ENCODE measurements at regions of chr9 and their contacts with region 1.

Region 1: GRCh38 chr9:107340920-107341632 is 58.0 kb downstream of the RAD23B start:
- DNase-seq: peak; percentile 86
- ATAC-seq: peak; percentile 84
- H3K4me3 Mint-ChIP-seq: no peak overlapping the region
- H3K27ac Mint-ChIP-seq: peak overlapping the region; percentile 69
- H3K4me1 Mint-ChIP-seq: peaks cover 15% of the 10 kb centered on the region
- H3K27me3 Mint-ChIP-seq: no peaks in the 10 kb centered on the region
- CTCF ChIP-seq: peak; percentile 89

Region 2: GRCh38 chr9:106339882-106340281 is 1001.2 kb before region 1 on chr9:
- CTCF ChIA-PET with region 1: no interaction called
- POLR2A ChIA-PET with region 1: no interaction called
- intact Hi-C with region 1: no loop called
- DNase-seq: no peak
- ATAC-seq: no peak
- H3K4me3 Mint-ChIP-seq: no peak overlapping the region
- H3K27ac Mint-ChIP-seq: no peak overlapping the region
- H3K4me1 Mint-ChIP-seq: no peaks in the 10 kb centered on the region
- H3K27me3 Mint-ChIP-seq: no peaks in the 10 kb centered on the region
- CTCF ChIP-seq: no peak

Region 3: GRCh38 chr9:107172160-107172978 is 168.7 kb before region 1 on chr9:
- CTCF ChIA-PET with region 1: interaction called, 10 read pairs
- POLR2A ChIA-PET with region 1: no interaction called
- intact Hi-C with region 1: no loop called
- DNase-seq: peak; percentile 80
- ATAC-seq: peak; percentile 70
- H3K4me3 Mint-ChIP-seq: no peak overlapping the region
- H3K27ac Mint-ChIP-seq: no peak overlapping the region
- H3K4me1 Mint-ChIP-seq: peaks cover 5% of the 10 kb centered on the region
- H3K27me3 Mint-ChIP-seq: peaks cover 6% of the 10 kb centered on the region
- CTCF ChIP-seq: peak; percentile 78

Region 4: DNA sequence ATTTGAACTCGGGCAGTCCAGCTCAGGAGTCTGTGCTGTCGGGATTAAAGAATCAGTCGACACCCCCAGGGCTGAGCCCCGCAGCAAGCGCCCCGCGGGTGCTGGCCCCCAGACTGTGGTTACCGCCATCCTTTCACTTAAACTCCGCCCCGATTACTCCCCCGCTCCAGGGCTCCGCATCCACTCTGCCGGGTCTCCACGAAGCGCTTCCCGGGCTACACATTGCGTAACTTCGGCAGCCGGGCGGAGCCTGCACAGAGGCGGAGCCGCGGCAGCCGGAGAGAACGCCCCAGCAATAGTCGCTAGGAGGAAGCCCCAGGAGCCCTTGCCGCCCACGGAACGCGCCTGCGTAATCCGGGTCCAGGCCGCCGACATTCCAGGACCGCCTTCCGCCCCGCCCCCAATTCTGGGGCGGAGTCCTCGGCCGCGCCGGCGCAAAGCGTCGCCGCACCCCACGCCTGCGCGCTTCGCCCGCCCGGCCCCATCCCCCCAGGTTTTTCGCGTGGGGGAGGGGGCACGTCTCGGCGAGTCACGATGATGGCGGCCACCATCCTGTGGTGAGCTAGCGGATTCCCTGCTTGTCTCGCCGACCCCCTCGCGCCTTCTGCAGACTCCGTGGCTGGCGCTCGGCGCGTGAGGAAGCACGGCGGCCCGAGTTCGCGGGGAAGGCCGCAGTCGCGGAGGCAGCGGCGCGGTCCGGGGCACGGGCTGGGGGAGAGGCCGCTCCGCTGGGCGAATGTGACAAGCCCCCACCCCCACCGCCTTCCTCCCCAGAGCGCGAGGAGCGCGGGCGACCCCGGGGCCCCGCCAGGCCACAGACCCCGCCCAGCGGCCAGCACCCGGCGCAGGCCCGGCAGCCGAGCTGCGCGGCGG is 58.1 kb before region 1 on chr9 and contains the start of gene RAD23B:
- CTCF ChIA-PET with region 1: interaction called, 16 read pairs
- POLR2A ChIA-PET with region 1: interaction called, 4 read pairs
- intact Hi-C with region 1: no loop called
- DNase-seq: peak; percentile 99
- ATAC-seq: peak; percentile 85
- H3K4me3 Mint-ChIP-seq: peak within 1 kb of the TSS; percentile 92
- H3K27ac Mint-ChIP-seq: peak within 1 kb of the TSS; percentile 93
- H3K4me1 Mint-ChIP-seq: peaks cover 41% of the 10 kb centered on the region
- H3K27me3 Mint-ChIP-seq: no peaks in the 10 kb centered on the region
- CTCF ChIP-seq: no peak
- total RNA-seq, gene RAD23B: 115 to 117 TPM

Region 5: GRCh38 chr9:107316795-107317661 is 24.0 kb before region 1 on chr9:
- CTCF ChIA-PET with region 1: interaction called, 24 read pairs
- POLR2A ChIA-PET with region 1: interaction called, 5 read pairs
- intact Hi-C with region 1: no loop called
- DNase-seq: no peak
- ATAC-seq: no peak
- H3K4me3 Mint-ChIP-seq: no peak overlapping the region
- H3K27ac Mint-ChIP-seq: peak overlapping the region; percentile 43
- H3K4me1 Mint-ChIP-seq: peaks cover 52% of the 10 kb centered on the region
- H3K27me3 Mint-ChIP-seq: no peaks in the 10 kb centered on the region
- CTCF ChIP-seq: no peak